GM18951 (cell line): ENCODE measurements at regions of chr15 and their contacts with region 1.

Region 1: GRCh38 chr15:74768771-74769342 is 13.0 kb upstream of the CSK start:
- POLR2A ChIP-seq: no peak

Region 2: GRCh38 chr15:73763931-73764330 is 1004.9 kb before region 1 on chr15:
- in situ Hi-C with region 1: no loop called
- POLR2A ChIP-seq: no peak

Region 3: GRCh38 chr15:74373731-74374647 is 394.9 kb before region 1 on chr15:
- in situ Hi-C with region 1: loop called (anchors 10 kb)
- POLR2A ChIP-seq: peak; percentile 57

Region 4: GRCh38 chr15:74626752-74627692 is 141.8 kb before region 1 on chr15:
- in situ Hi-C with region 1: loop called (anchors 5 kb)
- POLR2A ChIP-seq: no peak

Region 5: GRCh38 chr15:74808073-74808755 is 39.4 kb after region 1 on chr15:
- in situ Hi-C with region 1: loop called (anchors 5 kb)
- POLR2A ChIP-seq: no peak

Region 6: GRCh38 chr15:75061272-75061671 is 292.4 kb after region 1 on chr15:
- in situ Hi-C with region 1: no loop called
- POLR2A ChIP-seq: no peak